GM12878 (cell line): ENCODE measurements at regions of chr2 and their contacts with region 1.

Region 1: GRCh38 chr2:7748717-7749415 is 831.7 kb downstream of the RNF144A start:
- DNase-seq: no peak
- ATAC-seq: peak; percentile 70
- H3K4me3 ChIP-seq: no peak overlapping the region
- H3K27ac ChIP-seq: peak overlapping the region; percentile 43
- H3K4me1 ChIP-seq: peaks cover 3% of the 10 kb centered on the region; the same call in 1 of the 2 replicates
- H3K27me3 ChIP-seq: no peaks in the 10 kb centered on the region
- CTCF ChIP-seq: no peak
- EP300 ChIP-seq: 0 out of 4 replicates have a peak, but pooled peaks of 1 of the 2 experiments have one; percentile 14
- POLR2A ChIP-seq: no peak
- RAD21 ChIP-seq: no peak

Region 2: GRCh38 chr2:7730449-7730848 is 18.4 kb before region 1 on chr2:
- CTCF ChIA-PET with region 1: interaction called, 4 read pairs
- POLR2A ChIA-PET with region 1: interaction called, 4 read pairs
- RAD21 ChIA-PET with region 1: interaction called, 3 read pairs
- SMC1A ChIA-PET with region 1: interaction called, 10 read pairs
- in situ Hi-C with region 1: no loop called
- intact Hi-C with region 1: no loop called
- DNase-seq: no peak
- ATAC-seq: peak; percentile 24
- H3K4me3 ChIP-seq: no peak overlapping the region
- H3K27ac ChIP-seq: no peak overlapping the region
- H3K4me1 ChIP-seq: no peaks in the 10 kb centered on the region
- H3K27me3 ChIP-seq: no peaks in the 10 kb centered on the region; a peak in 1 of 4 replicates
- CTCF ChIP-seq: no peak
- EP300 ChIP-seq: no peak
- POLR2A ChIP-seq: no peak
- RAD21 ChIP-seq: no peak

Region 3: GRCh38 chr2:7736646-7737305 is 12.1 kb before region 1 on chr2:
- CTCF ChIA-PET with region 1: interaction called, 13 read pairs
- POLR2A ChIA-PET with region 1: interaction called, 5 read pairs
- RAD21 ChIA-PET with region 1: interaction called, 4 read pairs
- SMC1A ChIA-PET with region 1: interaction called, 15 read pairs
- in situ Hi-C with region 1: no loop called
- intact Hi-C with region 1: no loop called
- DNase-seq: no peak
- ATAC-seq: peak; percentile 33
- H3K4me3 ChIP-seq: no peak overlapping the region
- H3K27ac ChIP-seq: no peak overlapping the region
- H3K4me1 ChIP-seq: no peaks in the 10 kb centered on the region
- H3K27me3 ChIP-seq: no peaks in the 10 kb centered on the region
- CTCF ChIP-seq: no peak
- EP300 ChIP-seq: no peak
- POLR2A ChIP-seq: no peak
- RAD21 ChIP-seq: no peak